Posterior vena cava (tissue), 2 donors: ENCODE measurements at regions of chr12 and their contacts with region 1.

Region 1: GRCh38 chr12:107027636-107028053 is 40.7 kb upstream of the MTERF2 start:
- DNase-seq: no peak

Region 2: DNA sequence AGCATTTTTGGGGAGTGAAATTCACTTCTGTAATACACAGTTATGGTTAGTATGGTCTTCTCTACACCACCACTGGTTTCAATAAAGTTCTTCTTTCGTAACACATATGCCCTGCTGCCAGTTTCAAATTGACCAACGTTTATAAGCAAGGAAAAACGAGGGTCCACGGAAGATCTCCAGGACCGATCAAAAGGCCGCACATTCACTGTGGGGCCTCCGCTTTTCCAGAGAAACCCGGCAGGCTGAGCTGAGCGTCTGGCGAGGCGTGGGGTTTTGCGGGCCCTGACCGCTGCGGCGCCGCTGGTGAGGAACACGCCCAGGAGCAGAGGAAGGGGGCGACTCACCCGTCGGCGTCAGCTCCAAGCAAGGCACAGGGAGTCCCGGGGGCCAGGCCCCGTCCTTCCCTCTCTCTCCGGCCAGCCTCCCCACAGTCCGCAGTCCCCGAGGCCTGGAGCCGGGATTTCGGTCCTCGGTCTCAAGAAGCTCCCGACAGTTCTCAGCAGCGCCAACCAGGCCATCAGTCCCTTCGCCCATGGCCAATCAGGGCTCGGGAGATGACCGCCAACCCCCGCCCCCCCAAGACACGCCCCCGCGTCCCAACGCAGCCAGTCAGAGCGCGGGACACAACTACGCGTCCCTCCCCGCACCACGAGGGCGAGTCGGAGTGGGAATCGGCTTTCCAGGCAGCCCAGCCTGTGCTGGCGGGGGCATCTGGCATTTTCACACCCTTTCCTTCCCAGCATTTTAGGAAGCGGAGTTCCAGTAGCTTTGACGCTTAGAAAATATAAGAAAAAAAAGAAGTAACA is 40.8 kb before region 1 on chr12 and contains the start of gene MTERF2:
- intact Hi-C with region 1: loop called in 1 of 2 experiments (anchors 5 kb)
- DNase-seq: peak; percentile 97
- total RNA-seq, gene MTERF2: 8.3 to 10.4 TPM

Region 3: DNA sequence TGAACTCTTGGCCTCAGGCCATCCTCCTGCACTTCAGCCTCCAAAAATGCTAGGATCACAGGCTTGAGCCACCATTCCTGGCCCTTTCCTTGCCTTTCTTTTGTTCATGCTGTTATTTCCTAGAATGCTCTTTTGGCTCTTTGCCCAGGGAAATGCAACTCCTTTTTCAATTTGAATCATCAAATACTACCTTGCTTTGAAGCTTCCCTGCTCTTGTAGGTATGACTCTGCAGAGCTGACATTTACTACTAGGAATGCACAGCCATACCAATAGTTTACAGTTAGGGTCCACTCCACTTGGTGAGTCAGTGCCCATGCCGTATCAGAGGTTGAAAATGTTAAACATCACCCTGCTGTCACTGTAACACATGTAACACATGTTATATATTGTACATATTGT is 172.7 kb after region 1 on chr12:
- intact Hi-C with region 1: no loop called
- DNase-seq: no peak

Region 4: DNA sequence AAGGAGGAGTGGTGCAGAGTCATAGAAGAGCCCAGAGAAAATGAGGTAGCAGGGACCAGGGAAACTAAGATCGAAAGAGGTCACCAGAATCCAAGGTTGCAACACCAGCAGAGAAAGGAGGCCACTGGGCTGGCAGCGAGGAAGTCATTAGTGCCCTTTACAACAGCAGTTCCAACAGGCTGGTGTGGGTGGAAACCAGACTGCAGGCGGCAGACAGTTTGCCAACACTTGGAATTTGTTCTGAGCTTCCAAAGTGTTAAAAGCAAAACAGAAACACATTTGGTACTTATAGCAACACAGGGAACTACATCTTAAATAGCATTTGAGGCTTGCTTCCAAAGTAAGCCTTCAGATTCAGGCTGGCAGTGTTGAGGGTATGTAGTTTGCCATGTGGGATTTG is 562.8 kb after region 1 on chr12:
- intact Hi-C with region 1: no loop called
- DNase-seq: no peak